Activated T-helper 1 cell treated with anti-CD3 and anti-CD28 coated beads, Interleukin-12 subunit alpha, Interleukin-12 subunit beta, Interleukin-2, Interleukin-4 antibody, amounts not matched to agents 30 ng/mL and 10 ng/mL and 1 ng/mL, durations not matched to agents 14 hours and 24 hours and 36 hours (primary cell): ENCODE measurements at regions of chr18 and their contacts with region 1.

Region 1: DNA sequence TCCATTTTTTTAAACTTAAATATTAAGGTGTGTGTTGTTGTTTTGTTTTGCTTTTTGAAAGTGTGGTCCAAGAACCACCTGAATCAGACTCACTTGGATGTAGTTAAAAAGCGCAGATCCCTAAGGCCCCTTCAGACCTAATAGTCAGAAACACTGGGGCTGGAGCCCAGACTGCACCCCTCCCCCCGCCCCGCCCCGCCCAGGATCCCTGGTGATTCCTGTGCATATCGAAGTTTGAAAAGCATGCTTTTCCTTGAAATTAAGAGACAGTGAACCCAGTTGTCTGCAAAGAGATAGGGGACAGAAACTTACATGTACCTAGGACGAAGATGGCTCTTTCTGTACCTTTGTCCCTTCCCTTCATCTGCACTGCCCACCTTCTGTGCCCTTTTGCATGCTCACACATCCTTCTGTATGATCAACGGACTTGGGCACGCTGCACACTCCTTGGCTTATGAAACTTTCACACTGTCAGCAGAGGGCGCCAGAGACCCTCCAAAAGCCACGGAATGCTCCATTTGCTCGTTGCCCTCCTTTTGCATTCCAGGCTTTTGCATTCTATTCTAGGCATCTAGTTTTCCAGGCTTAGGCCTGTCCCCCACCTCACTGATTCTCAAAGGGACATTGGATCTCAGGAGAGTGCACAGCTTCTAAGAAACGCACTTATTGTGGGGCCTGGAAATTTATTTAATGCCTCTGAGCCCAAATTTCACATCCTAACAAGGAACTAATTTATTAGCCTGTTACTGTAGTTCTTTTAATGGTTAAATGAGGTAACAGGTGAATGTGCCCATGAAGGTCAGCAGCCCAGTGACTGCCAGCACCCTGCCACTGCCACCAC is 32.8 kb upstream of the SLC14A1 start:
- DNase-seq: peak; percentile 55
- H3K4me3 Mint-ChIP-seq: no peak overlapping the region
- H3K27ac Mint-ChIP-seq: no peak overlapping the region
- H3K4me1 Mint-ChIP-seq: peaks cover 31% of the 10 kb centered on the region
- H3K27me3 Mint-ChIP-seq: peaks cover 44% of the 10 kb centered on the region

Region 2: DNA sequence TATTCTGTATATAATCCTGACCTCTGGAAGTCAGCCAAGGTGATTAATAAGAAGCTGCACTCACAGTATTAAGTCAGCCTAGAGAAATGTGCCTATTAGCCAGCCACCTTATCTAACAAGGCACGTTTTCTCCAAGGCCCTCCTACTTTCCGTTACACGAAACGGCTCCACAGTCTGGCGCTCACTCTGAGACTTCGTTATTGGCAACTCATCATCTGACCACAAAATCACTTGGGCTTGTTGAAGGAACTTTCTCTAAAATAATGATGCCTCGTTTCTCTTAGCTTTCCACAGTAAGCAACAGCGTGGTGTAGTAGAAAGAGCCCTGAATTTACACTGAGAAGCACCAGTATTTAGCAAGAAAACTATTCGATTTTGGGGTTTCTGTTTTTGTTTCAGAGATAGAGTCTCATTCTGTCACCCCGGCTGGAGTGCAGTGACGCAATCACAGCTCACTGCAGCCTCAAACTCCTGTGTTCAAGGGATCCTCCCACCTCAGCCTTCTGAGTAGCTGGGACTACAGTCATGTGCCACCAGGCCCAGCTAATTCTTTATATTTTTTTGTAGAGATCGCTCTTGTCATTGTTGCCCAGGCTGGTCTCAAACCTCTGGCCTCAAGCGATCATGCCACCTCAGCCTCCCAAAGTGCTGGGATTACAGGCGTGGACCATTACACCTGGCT is 20.8 kb before region 1 on chr18:
- intact Hi-C with region 1: loop called (anchors 1 kb)
- DNase-seq: no peak
- H3K4me3 Mint-ChIP-seq: peak overlapping the region; percentile 46
- H3K27ac Mint-ChIP-seq: peak overlapping the region; percentile 50
- H3K4me1 Mint-ChIP-seq: peaks cover 61% of the 10 kb centered on the region
- H3K27me3 Mint-ChIP-seq: peaks cover 32% of the 10 kb centered on the region

Region 3: DNA sequence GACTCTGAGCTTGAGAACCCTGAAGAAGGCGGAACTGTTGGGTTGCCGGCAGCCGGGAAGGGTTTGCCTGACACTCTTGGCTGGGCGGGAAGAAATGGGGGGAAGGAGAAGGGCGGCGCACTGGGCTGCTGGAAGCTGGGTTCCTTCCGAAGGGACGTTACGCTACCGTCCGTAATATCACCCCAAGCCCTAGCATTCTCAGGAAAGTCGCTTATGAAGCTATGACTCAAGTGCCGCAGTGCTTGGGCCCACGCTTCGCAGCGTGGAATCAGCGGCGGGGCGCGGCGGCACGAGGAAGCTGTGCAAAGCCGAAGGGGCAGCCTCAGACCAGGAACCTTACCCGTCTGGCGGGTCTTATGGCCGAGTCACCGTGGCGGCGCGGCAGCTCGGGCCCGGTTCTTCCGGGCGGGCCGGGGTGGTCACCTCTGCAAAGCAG is 84.1 kb after region 1 on chr18:
- intact Hi-C with region 1: loop called (anchors 5 kb)
- DNase-seq: peak; percentile 18
- H3K4me3 Mint-ChIP-seq: peak overlapping the region; percentile 76
- H3K27ac Mint-ChIP-seq: peak overlapping the region; percentile 14
- H3K4me1 Mint-ChIP-seq: peaks cover 15% of the 10 kb centered on the region
- H3K27me3 Mint-ChIP-seq: peaks cover 54% of the 10 kb centered on the region

Region 4: GRCh38 chr18:45828917-45829811 is 138.0 kb after region 1 on chr18:
- intact Hi-C with region 1: no loop called
- DNase-seq: no peak
- H3K4me3 Mint-ChIP-seq: no peak overlapping the region
- H3K27ac Mint-ChIP-seq: no peak overlapping the region
- H3K4me1 Mint-ChIP-seq: peaks cover 12% of the 10 kb centered on the region
- H3K27me3 Mint-ChIP-seq: peaks cover 11% of the 10 kb centered on the region

Region 5: DNA sequence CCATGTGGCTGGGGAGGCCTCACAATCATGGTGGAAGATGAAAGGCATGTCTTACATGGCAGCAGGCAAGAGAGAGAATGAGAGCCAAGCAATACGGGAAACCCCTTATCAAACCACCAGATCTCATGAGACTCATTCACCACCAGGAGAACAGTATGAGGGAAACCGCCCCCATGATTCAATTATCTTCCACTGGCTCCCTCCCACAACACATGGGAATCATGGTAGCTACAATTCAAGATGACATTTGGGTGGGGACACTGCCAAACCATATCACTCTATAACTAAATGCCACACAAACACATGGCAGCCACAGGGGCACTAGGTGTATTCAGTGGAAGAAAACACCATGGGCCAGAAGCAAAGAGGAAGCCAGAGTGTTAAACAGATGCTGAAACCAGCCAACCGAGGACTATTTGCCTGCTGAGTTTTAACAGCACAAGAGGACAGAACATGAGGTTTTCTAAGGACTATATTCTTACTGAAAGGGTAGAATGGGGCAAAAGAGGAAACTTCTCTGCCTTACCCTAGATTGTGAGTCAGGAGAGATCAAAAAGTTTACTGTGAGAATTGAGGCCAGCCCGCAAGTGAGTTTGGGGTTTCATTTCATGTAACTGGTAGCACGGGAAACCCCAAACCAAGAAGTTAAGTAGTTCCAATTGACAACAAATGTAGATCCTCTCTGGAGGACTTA is 183.4 kb after region 1 on chr18:
- intact Hi-C with region 1: loop called (anchors 1 kb)
- DNase-seq: peak; percentile 67
- H3K4me3 Mint-ChIP-seq: peak overlapping the region; percentile 11
- H3K27ac Mint-ChIP-seq: peak overlapping the region; percentile 90
- H3K4me1 Mint-ChIP-seq: peaks cover 32% of the 10 kb centered on the region
- H3K27me3 Mint-ChIP-seq: peaks cover 2% of the 10 kb centered on the region

Region 6: DNA sequence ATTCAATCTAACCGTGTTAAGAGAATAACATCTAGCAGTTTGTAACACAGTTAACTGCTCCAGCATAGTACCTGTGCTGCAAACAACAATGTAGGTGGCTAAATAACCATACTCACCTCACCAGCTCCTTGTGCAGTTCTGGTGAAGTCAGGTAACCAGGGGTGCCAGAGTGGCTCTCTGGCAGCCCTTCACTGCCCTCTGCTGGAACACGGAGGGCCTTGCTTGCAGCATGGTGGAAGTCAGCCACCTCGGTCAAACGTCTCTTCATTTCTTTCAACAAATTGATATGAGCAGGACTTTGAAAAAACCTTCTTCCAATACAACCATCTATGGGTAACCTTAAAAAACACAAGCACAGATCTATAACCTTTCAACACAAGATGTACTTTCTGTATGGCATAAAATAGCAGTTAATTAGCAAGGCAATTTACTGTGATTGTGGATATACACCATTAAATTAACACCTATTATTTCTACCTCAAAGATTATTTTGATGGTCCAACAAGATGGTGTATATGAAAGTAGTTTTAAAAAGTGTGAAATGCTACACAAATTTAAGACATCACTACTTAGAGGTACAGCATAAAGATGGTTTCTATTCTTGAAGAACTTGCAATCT is 219.3 kb after region 1 on chr18:
- intact Hi-C with region 1: loop called (anchors 1 kb)
- DNase-seq: peak; percentile 25
- H3K4me3 Mint-ChIP-seq: no peak overlapping the region
- H3K27ac Mint-ChIP-seq: no peak overlapping the region
- H3K4me1 Mint-ChIP-seq: no peaks in the 10 kb centered on the region
- H3K27me3 Mint-ChIP-seq: no peaks in the 10 kb centered on the region

Region 7: DNA sequence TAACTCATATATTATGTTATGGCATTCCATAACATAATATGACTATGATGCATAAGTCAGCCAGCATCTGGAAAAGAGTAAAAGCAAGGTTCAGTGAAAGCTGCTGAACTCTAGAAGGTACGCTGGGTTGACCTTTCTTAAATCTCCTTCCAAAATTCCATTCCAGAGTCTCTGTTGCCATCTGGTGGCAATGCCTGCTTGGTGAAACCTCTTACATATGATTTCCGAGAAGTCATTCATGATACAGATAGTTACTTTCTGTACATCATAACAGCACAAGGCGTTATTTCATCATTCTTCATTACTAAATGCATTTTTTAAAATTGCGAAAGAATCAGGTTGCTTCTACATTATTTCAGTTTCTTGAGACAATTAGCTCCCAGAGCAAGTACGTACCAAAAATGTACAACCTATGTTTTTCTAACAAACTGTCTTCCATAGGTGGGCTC is 282.9 kb after region 1 on chr18:
- intact Hi-C with region 1: loop called (anchors 1 kb)
- DNase-seq: peak; percentile 51
- H3K4me3 Mint-ChIP-seq: no peak overlapping the region
- H3K27ac Mint-ChIP-seq: no peak overlapping the region
- H3K4me1 Mint-ChIP-seq: peaks cover 7% of the 10 kb centered on the region
- H3K27me3 Mint-ChIP-seq: peaks cover 4% of the 10 kb centered on the region